ENCODE measurements at regions of chr1 and their contacts with region 1.

Region 1: GRCh38 chr1:201912832-201913231 is 24.1 kb downstream of the SHISA4 start:
- DNase-seq: no peak
- ATAC-seq: peak in 1 of 8 donors; percentile 36
- H3K4me3 ChIP-seq: no peak overlapping the region
- H3K27ac ChIP-seq: peak overlapping the region in 3 of 10 donors; percentile 13 to 39 (median 31)
- H3K4me1 ChIP-seq: peaks cover 3 to 24% (median 18%) of the 10 kb centered on the region in 9 donors
- H3K27me3 ChIP-seq: no peaks in the 10 kb centered on the region
- CTCF ChIP-seq: no peak

Region 2: DNA sequence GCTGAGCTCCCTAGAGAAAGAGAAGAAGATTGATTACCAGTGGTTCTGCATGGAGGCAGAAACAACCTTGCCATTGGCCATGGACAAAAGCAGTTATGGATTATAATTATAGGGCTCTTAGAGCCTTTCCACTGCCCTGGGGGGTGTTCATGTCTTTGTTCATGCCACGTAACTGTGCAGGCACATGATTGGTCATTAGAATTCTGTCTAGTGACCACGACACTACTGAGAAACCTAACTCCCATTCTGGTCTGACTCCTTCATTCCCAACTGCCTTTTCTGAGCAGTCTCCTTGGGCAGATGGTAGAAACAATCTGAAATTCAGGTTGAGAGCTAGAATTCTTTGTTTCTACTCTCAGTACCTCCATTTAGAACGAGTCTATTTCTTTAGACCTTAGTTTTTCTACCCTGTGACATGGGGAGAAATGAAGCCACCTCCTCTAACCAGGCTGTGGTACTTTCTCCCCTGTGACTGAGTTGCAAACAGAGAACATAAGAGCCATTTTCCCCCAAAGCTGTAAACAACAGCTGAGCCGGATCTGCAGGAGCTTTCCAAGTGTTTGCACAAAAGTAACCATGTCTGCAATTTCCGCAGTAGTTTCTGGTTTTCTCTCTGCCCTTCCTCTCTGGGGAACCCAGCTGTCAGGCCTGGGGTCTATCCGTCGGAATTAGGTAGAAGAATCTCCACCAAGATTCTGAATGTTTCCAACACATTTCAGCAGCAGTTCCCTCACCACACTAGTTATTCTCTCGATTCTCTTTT is 121.6 kb before region 1 on chr1:
- intact Hi-C with region 1: no loop called
- DNase-seq: peak in 1 of 2 donors; percentile 56
- ATAC-seq: peak in 6 of 8 donors; percentile 9 to 43 (median 29)
- H3K4me3 ChIP-seq: no peak overlapping the region
- H3K27ac ChIP-seq: peak overlapping the region; percentile 53 to 94 (median 82)
- H3K4me1 ChIP-seq: peaks cover 48 to 90% (median 71%) of the 10 kb centered on the region in 9 donors
- H3K27me3 ChIP-seq: no peaks in the 10 kb centered on the region
- CTCF ChIP-seq: no peak

Region 3: DNA sequence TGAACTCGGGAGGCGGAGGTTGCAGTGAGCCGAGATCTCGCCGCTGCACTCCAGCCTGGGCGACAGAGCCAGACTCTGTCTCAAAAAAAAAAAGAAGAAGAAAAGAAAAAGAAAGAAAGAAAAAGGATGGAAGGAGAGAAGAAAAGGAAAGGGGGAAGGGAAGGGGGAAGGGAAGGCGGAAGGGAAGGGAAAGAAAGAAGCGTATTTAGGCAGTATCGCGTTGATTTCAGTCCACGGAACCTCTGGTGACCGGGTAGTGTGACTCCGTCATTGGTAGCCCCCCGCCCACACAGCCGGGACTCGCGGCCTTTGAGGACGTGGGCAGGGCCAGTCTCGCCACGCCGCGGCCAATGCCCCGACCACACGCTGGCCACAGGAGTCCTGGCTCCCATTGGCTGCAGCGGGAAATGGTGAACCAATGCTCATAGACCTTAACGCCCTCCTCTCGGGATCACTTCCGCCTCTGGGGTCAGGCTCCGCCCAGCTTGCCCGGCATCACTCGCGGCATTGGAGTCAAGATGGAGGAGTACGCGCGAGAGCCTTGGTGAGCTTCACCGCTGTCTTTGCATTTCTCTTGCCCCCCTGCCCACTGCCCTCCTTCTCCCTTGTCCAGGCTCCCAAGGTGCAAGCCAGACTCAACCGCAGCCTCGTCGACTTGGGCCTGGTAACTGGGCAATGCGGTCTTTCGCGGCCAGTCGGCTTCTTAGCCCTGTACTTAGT is 42.3 kb after region 1 on chr1 and contains the start of gene TIMM17A:
- intact Hi-C with region 1: loop called in 1 of 10 experiments (anchors 5 kb)
- DNase-seq: peak; percentile 94 to 97
- ATAC-seq: peak; percentile 99 to 100 (median 100)
- H3K4me3 ChIP-seq: peak within 1 kb of the TSS; percentile 66 to 94 (median 82)
- H3K27ac ChIP-seq: peak within 1 kb of the TSS; percentile 30 to 91 (median 84)
- H3K4me1 ChIP-seq: peaks cover 3 to 27% (median 16%) of the 10 kb centered on the region in 9 donors
- H3K27me3 ChIP-seq: no peaks in the 10 kb centered on the region
- CTCF ChIP-seq: peak in 2 of 9 donors; percentile 7 to 14
- total RNA-seq, gene TIMM17A: 71.1 to 113 (median 88.9) TPM